GM18951 (cell line): ENCODE measurements at regions of chr12 and their contacts with region 1.

Region 1: DNA sequence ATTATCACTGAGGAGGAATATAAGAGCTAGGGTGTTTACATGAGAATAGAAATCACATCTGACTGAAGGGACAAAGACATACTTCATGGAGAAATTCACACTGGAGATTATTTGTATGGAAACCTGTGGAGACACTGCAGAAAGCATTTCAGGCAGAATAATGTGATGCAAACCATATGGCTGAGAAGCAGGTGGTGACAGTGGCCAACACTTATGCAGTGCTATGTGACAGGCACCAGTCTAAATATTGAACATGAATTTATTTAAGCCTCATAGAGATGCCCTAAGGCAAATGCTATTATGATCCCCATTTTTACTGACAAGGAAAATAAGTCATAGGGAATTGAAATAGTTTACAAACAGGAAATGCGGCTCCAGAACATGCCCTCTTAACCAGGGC is 16.2 kb downstream of the ALG10B start:
- POLR2A ChIP-seq: no peak

Region 2: GRCh38 chr12:38258411-38258810 is 74.4 kb before region 1 on chr12:
- in situ Hi-C with region 1: no loop called
- POLR2A ChIP-seq: no peak

Region 3: DNA sequence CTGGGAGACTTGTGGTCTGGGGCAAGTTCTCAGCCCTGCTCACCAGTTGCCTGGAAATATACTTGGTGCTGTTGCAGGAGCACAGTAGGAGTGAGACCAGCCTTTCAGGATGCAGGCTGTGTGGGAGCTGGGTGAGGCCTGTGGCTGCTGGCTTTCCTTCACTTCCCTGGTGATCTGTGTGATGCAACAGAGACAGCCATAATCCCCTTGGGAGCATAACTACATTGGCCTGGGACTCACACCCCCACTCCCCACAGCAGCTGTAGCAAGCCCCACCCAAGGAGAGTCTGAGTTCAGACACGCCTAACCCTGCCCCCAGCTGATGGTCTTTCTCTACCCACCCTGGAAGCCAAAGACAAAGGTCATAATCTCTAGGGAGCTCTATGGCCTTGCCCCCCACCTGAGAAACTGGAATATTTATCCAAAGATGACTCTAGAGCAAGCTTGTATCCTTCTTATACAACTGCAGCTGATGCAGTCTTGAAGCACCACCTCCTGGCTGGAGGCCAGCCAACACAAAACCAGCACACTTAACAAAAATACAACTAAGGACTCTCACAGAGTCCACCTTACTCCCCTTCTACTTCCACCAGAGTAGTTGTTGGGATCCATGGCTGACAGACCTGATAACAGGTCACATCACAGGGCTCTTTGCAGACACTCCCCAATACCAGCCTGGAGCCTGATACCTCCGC is 763.0 kb after region 1 on chr12:
- in situ Hi-C with region 1: loop called (anchors 5 kb)
- POLR2A ChIP-seq: no peak

Region 4: GRCh38 chr12:39272871-39273770 is 940.3 kb after region 1 on chr12:
- in situ Hi-C with region 1: loop called (anchors 25 kb)
- POLR2A ChIP-seq: no peak